Natural killer cell (primary cell): ENCODE measurements at regions of chr17 and their contacts with region 1.

Region 1: DNA sequence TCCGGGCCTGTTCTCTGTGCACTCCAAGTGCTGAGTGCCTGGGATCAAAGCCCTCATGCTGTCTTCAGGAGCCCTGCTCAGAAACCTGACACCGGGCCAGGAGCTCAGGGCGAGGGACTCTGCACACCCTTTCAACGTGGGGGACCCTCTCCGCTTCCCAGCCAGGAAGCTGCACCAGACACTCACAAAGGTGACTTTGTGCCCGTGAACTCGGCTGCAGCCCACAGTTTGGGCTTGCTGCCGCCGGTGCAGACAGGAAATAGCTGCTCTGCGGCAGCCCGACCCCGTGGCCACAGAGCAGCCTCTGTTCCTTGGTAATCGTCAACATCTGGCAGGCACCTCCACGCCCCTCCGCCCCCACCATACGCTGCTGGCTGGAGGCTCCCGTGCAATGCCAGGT is 93.4 kb upstream of the METRNL start:
- DNase-seq: peak; percentile 62 to 80
- ATAC-seq: peak; percentile 88 to 97 (median 94)
- H3K4me3 ChIP-seq: no peak overlapping the region
- H3K4me3 Mint-ChIP-seq: peak overlapping the region; percentile 86
- H3K27ac ChIP-seq: peak overlapping the region; percentile 2
- H3K27ac Mint-ChIP-seq: peak overlapping the region; percentile 78 to 86
- H3K4me1 ChIP-seq: peaks cover 24% of the 10 kb centered on the region
- H3K4me1 Mint-ChIP-seq: peaks cover 20 to 44% of the 10 kb centered on the region in 2 donors
- H3K27me3 ChIP-seq: no peaks in the 10 kb centered on the region
- H3K27me3 Mint-ChIP-seq: no peaks in the 10 kb centered on the region
- CTCF ChIP-seq: no peak

Region 2: GRCh38 chr17:82917691-82918345 is 68.2 kb before region 1 on chr17:
- intact Hi-C with region 1: no loop called
- DNase-seq: peak in 1 of 2 donors; percentile 59
- ATAC-seq: peak; percentile 21 to 68 (median 49)
- H3K4me3 ChIP-seq: no peak overlapping the region
- H3K4me3 Mint-ChIP-seq: no peak overlapping the region
- H3K27ac ChIP-seq: no peak overlapping the region
- H3K27ac Mint-ChIP-seq: no peak overlapping the region
- H3K4me1 ChIP-seq: peaks cover 4% of the 10 kb centered on the region
- H3K4me1 Mint-ChIP-seq: peaks cover under 1 to 9% of the 10 kb centered on the region in 2 donors
- H3K27me3 ChIP-seq: no peaks in the 10 kb centered on the region
- H3K27me3 Mint-ChIP-seq: no peaks in the 10 kb centered on the region
- CTCF ChIP-seq: peak; percentile 24

Region 3: DNA sequence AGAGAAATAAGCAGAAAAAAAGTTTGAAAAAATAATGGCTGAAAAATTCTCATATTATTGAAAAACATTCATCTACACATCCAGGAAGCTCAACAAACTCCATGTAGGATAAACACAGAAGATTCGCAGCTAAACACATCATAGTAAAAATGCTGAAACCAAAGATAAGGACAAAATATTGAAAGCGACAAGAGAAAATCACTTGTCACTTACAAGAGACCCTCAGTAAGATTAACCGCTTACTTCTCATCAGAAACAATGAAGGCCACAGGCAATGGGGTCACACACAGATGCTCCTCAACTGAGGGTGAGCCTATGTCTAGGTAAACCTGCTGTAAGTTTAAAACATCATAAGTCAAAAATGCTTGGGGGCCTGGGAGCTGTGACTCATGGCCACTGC is 55.3 kb after region 1 on chr17:
- intact Hi-C with region 1: loop called (anchors 10 kb)
- DNase-seq: no peak
- ATAC-seq: no peak
- H3K4me3 ChIP-seq: no peak overlapping the region
- H3K4me3 Mint-ChIP-seq: no peak overlapping the region
- H3K27ac ChIP-seq: no peak overlapping the region
- H3K27ac Mint-ChIP-seq: no peak overlapping the region
- H3K4me1 ChIP-seq: no peaks in the 10 kb centered on the region
- H3K4me1 Mint-ChIP-seq: peaks cover under 1 to 6% of the 10 kb centered on the region in 2 donors
- H3K27me3 ChIP-seq: no peaks in the 10 kb centered on the region
- H3K27me3 Mint-ChIP-seq: no peaks in the 10 kb centered on the region
- CTCF ChIP-seq: no peak